ENCODE measurements at regions of chr10 and their contacts with region 1.

Region 1: GRCh38 chr10:93160829-93161228 is 87.1 kb downstream of the CYP26A1 start:
- DNase-seq: peak; percentile 55 to 76 (median 74)
- H3K4me3 ChIP-seq: no peak overlapping the region
- H3K4me3 Mint-ChIP-seq: no peak overlapping the region
- H3K27ac ChIP-seq: no peak overlapping the region
- H3K27ac Mint-ChIP-seq: peak overlapping the region in 3 of 7 donors; percentile 15 to 47 (median 24)
- H3K4me1 ChIP-seq: peaks cover under 1 to 3% of the 10 kb centered on the region in 2 donors
- H3K4me1 Mint-ChIP-seq: peaks cover 8% of the 10 kb centered on the region
- H3K27me3 ChIP-seq: no peaks in the 10 kb centered on the region
- H3K27me3 Mint-ChIP-seq: peaks cover 2 to 3% (median 3%) of the 10 kb centered on the region in 3 donors
- CTCF ChIP-seq: no peak

Region 2: DNA sequence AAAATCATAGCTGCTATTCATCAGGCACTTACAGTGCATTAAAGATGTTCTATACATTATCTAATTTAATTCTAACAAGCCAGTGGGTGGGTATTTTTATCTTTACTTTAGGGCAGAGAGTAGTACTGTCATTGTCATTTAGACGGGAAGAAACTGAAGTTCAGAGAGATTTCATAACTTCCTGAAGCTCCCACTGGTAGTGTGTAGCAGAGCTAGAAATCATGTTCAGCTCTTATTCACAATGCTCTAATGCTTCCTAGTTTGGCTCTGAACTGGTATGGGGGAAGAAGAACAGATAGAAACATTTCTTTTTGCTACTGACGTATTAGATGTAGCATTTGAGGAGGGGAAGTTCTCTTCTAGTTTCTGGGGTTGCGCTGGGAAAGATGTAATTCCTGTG is 29.5 kb after region 1 on chr10:
- intact Hi-C with region 1: loop called in 1 of 2 experiments (anchors 2 kb)
- DNase-seq: peak; percentile 40 to 60 (median 46)
- H3K4me3 ChIP-seq: peak overlapping the region in 1 of 3 experiments; percentile 33
- H3K4me3 Mint-ChIP-seq: peak overlapping the region in 1 of 2 donors; percentile 36
- H3K27ac ChIP-seq: peak overlapping the region; percentile 36 to 73
- H3K27ac Mint-ChIP-seq: peak overlapping the region; percentile 3 to 92 (median 58)
- H3K4me1 ChIP-seq: peaks cover 21% of the 10 kb centered on the region in 2 donors
- H3K4me1 Mint-ChIP-seq: peaks cover 16% of the 10 kb centered on the region
- H3K27me3 ChIP-seq: no peaks in the 10 kb centered on the region
- H3K27me3 Mint-ChIP-seq: peaks cover 0 to 2% (median under 1%) of the 10 kb centered on the region in 3 donors
- CTCF ChIP-seq: no peak

Measured in CD14-positive monocyte (primary cell).